Activated CD8-positive, alpha-beta T cell treated with anti-CD3 and anti-CD28 coated beads for 36 hours (primary cell): ENCODE measurements at regions of chr19 and their contacts with region 1.

Region 1: DNA sequence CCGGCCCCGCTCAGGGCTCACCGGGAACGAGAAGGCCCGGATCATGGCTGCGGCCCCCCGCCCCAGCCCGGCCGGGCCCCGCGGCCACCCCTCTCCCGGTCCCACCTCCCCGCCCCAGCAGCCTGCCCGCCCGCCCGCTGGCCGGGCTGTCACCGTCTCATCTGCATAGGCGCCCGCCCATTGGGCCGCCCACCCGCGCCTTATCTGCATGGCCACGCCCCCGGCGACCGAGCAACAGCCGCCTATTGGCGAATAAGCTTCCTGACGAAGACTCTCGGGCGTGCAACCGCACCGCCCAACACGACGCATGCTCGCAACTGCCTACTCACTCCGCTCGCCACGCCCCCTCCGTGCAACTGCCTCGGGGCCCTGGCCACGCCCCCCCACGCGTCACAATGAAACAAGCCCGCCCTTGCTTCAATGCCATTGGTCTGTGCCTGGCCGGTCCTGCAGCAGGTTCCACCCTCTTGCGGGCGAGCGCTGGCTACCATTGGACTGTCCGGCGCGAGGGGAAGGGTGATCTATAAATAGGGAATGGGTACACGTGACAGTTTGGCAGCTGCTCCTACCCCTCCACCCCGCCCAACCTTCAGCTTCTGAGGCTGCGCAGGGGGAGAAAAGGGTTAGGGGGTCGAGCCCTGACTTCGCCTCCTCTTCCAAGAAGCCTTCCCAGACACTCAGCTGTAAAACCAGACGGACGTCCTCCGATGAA is at the start of gene DACT3:
- DNase-seq: peak; percentile 100
- ATAC-seq: peak; percentile 88
- H3K4me3 Mint-ChIP-seq: peak within 1 kb of the TSS; percentile 74
- H3K27ac Mint-ChIP-seq: peak within 1 kb of the TSS; percentile 69
- H3K4me1 Mint-ChIP-seq: peaks cover 25% of the 10 kb centered on the region
- H3K27me3 Mint-ChIP-seq: peaks cover 22% of the 10 kb centered on the region
- CTCF ChIP-seq: no peak
- total RNA-seq, gene DACT3: 5.8 to 6.1 TPM

Region 2: DNA sequence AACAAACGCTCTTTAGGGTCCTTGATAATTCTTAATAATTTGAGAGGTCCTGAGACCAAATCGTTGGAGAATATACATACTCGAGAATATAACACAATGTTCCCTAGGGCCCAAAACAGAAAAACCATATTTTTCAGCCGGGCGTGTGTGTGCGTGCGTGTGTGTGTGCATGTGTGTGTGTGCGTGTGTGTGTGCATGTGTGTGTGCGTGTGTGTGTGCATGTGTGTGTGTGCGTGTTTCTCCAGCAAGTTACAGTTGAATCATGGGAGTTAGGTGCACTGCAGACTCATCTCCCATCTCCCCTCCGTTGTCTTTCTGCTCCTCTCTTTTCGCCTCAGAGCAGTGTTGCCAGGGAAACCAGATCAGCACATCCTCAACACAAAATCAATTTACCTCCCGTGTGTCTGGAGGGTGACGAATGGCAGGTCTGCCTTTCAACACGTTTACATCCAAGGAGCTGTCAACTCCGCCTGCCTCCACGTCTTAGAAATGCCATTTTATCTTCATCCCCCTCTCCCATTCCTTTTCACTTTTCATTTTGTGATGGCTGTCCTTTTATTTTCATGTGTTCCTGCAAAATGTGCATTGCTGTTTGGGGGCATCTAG is 157.2 kb before region 1 on chr19:
- CTCF ChIA-PET with region 1: no interaction called
- POLR2A ChIA-PET with region 1: no interaction called
- intact Hi-C with region 1: no loop called
- DNase-seq: no peak
- ATAC-seq: no peak
- H3K4me3 Mint-ChIP-seq: no peak overlapping the region
- H3K27ac Mint-ChIP-seq: no peak overlapping the region
- H3K4me1 Mint-ChIP-seq: no peaks in the 10 kb centered on the region
- H3K27me3 Mint-ChIP-seq: peaks cover 23% of the 10 kb centered on the region
- CTCF ChIP-seq: no peak

Region 3: GRCh38 chr19:46529622-46530462 is 131.3 kb before region 1 on chr19:
- CTCF ChIA-PET with region 1: interaction called, 41 read pairs
- POLR2A ChIA-PET with region 1: no interaction called
- intact Hi-C with region 1: loop called (anchors 5 kb)
- DNase-seq: peak; percentile 79
- ATAC-seq: peak; percentile 68
- H3K4me3 Mint-ChIP-seq: no peak overlapping the region
- H3K27ac Mint-ChIP-seq: peak overlapping the region; percentile 51
- H3K4me1 Mint-ChIP-seq: peaks cover 12% of the 10 kb centered on the region
- H3K27me3 Mint-ChIP-seq: no peaks in the 10 kb centered on the region
- CTCF ChIP-seq: peak; percentile 99

Region 4: GRCh38 chr19:46542428-46543230 is 118.5 kb before region 1 on chr19:
- CTCF ChIA-PET with region 1: interaction called, 19 read pairs
- POLR2A ChIA-PET with region 1: no interaction called
- intact Hi-C with region 1: no loop called
- DNase-seq: peak; percentile 96
- ATAC-seq: peak; percentile 72
- H3K4me3 Mint-ChIP-seq: no peak overlapping the region
- H3K27ac Mint-ChIP-seq: no peak overlapping the region
- H3K4me1 Mint-ChIP-seq: peaks cover 2% of the 10 kb centered on the region
- H3K27me3 Mint-ChIP-seq: peaks cover under 1% of the 10 kb centered on the region
- CTCF ChIP-seq: peak; percentile 91

Region 5: DNA sequence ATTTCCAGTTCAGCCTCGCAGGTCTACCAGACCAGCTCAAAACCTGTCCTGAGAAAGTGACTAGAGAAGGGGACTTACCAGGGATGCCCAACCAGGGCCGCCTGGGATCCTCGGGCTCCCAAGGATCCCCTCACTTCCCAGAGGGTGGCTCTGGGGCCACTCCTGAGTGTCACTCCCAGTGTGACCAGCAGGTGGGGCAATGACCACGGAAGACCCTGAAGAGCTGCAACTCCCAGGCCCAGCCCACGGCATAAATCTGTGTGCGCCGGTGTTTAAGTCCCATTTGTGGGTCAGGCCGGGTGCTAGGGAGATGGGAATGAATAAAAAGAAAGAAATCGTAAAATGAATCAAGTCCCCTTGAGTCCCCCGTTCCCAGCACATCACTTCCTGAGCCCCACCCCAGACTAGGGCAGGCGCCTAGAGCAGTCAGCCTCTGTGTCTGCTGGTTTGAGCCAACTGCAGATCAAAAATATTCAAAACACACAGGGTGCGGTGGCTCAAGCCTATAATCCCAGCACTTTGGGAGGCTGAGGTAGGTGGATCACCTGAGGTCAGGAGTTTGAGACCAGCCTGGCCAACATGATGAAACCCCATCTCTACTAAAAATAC is 47.0 kb before region 1 on chr19:
- CTCF ChIA-PET with region 1: interaction called, 300 read pairs
- POLR2A ChIA-PET with region 1: interaction called, 28 read pairs
- intact Hi-C with region 1: loop called (anchors 1 kb)
- DNase-seq: peak; percentile 92
- ATAC-seq: peak; percentile 55
- H3K4me3 Mint-ChIP-seq: peak overlapping the region; percentile 32
- H3K27ac Mint-ChIP-seq: peak overlapping the region; percentile 89
- H3K4me1 Mint-ChIP-seq: peaks cover 72% of the 10 kb centered on the region
- H3K27me3 Mint-ChIP-seq: no peaks in the 10 kb centered on the region
- CTCF ChIP-seq: peak; percentile 96

Region 6: GRCh38 chr19:46634045-46634655 is 27.0 kb before region 1 on chr19:
- CTCF ChIA-PET with region 1: interaction called, 30 read pairs
- POLR2A ChIA-PET with region 1: interaction called, 4 read pairs
- intact Hi-C with region 1: no loop called
- DNase-seq: peak; percentile 98
- ATAC-seq: peak; percentile 74
- H3K4me3 Mint-ChIP-seq: peak overlapping the region; percentile 82
- H3K27ac Mint-ChIP-seq: peak overlapping the region; percentile 66
- H3K4me1 Mint-ChIP-seq: peaks cover 18% of the 10 kb centered on the region
- H3K27me3 Mint-ChIP-seq: no peaks in the 10 kb centered on the region
- CTCF ChIP-seq: no peak

Region 7: GRCh38 chr19:46678110-46678732 is 17.0 kb after region 1 on chr19:
- CTCF ChIA-PET with region 1: interaction called, 13 read pairs
- POLR2A ChIA-PET with region 1: interaction called, 5 read pairs
- intact Hi-C with region 1: no loop called
- DNase-seq: peak; percentile 80
- ATAC-seq: peak; percentile 97
- H3K4me3 Mint-ChIP-seq: no peak overlapping the region
- H3K27ac Mint-ChIP-seq: peak overlapping the region; percentile 56
- H3K4me1 Mint-ChIP-seq: peaks cover 6% of the 10 kb centered on the region
- H3K27me3 Mint-ChIP-seq: no peaks in the 10 kb centered on the region
- CTCF ChIP-seq: no peak

Region 8: DNA sequence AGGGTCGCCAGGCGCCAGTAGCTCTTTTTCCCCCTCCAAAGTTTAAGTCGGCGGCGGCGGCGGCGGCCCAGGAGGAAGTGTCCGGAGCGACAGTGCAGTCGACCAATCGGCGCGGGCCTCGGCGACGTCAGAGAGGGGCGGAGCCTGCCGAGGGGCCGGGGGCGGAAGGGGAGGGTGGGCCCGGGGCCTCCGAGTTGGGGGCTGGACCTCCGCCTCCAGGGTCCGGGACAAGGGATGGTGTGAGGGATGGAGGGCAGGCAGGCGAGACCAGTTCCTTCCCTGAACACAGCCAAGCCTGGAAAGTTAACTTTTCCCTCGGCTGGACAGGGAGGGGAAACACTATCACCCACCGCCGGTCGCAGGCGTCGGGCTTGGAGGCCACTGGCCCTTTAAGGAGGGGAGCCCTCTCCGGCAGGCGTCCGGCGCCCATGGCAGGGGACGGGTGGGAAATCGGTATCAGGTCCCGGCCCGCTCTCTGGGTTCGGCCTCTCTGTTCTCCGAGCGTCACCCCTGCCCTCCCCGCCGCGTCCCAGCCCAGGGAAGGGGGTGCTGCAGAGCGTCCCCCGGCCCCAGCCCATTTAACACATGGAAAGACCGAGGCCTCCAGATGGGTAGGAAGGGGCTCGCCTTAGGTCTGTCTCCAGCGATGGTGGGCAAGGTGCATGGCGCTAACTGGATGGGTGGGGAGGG is 56.0 kb after region 1 on chr19 and contains the start of gene PRKD2:
- CTCF ChIA-PET with region 1: interaction called, 14 read pairs
- POLR2A ChIA-PET with region 1: interaction called, 5 read pairs
- intact Hi-C with region 1: no loop called
- DNase-seq: peak; percentile 92
- ATAC-seq: peak; percentile 62
- H3K4me3 Mint-ChIP-seq: peak within 1 kb of the TSS; percentile 86
- H3K27ac Mint-ChIP-seq: peak within 1 kb of the TSS; percentile 94
- H3K4me1 Mint-ChIP-seq: peaks cover 38% of the 10 kb centered on the region
- H3K27me3 Mint-ChIP-seq: no peaks in the 10 kb centered on the region
- CTCF ChIP-seq: no peak
- total RNA-seq, gene PRKD2: 81.1 to 86.0 TPM